Heart right ventricle (tissue), 16 donors: ENCODE measurements at regions of chr12 and their contacts with region 1.

Region 1: DNA sequence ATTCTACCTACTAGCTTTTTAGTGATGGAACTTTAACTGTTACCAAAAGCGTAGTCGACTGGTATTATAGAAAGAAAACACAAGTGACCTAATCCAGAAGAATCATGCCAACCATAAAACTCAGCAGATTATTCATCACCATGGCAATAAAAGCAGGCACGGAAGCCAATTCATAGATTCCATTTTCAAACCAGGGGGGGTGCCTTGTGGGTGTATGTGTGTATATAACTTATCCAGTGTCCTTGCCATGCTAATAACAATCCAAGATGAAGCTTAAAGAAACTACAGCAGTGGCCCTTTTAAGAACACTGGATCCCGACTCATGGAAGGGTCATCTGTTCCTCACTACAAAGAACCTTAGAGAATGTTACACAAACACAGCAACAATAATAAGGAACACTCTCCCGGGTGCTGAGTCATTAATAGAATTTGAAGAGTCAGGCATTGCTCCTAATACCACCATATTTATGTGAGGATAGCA is 61.0 kb downstream of the EPS8 start:
- DNase-seq: no peak
- ATAC-seq: peak in 1 of 8 donors; percentile 47
- H3K4me3 ChIP-seq: no peak overlapping the region
- H3K27ac ChIP-seq: peak overlapping the region in 1 of 10 donors; percentile 54
- H3K4me1 ChIP-seq: peaks cover 0 to 58% (median 10%) of the 10 kb centered on the region in 9 donors
- H3K27me3 ChIP-seq: no peaks in the 10 kb centered on the region
- CTCF ChIP-seq: no peak

Region 2: DNA sequence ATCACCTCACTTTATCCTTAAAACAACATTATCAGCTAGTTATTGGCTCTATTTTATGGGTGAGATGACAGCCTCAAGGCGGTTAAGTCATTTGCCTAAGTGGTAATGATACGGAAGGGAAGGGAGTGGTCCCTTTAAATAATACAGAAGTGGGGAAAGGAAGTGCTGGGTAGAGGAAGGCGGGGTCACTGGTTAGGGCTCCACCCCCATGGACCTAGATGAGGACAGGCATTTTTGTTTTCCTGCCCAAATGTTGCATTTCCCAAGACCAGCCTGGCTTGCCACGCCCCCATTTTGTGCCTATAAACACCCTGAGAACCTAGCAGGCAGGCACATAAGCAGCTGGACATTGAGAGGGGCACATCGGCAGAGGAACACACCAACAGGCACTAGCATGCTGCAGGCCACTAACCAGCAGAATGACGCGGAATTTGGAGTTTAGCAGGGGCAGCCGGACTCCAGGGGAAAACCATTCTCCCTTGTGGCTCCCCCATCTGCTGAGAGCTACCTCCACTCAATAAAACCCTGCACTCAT is 39.9 kb before region 1 on chr12:
- intact Hi-C with region 1: loop called in 1 of 10 experiments (anchors 5 kb)
- DNase-seq: peak; percentile 61 to 67
- ATAC-seq: peak; percentile 68 to 84 (median 78)
- H3K4me3 ChIP-seq: peak overlapping the region in 6 of 10 donors; percentile 17 to 37 (median 26)
- H3K27ac ChIP-seq: peak overlapping the region in 9 of 10 donors; percentile 54 to 81 (median 63)
- H3K4me1 ChIP-seq: peaks cover 0 to 81% (median 28%) of the 10 kb centered on the region in 9 donors
- H3K27me3 ChIP-seq: no peaks in the 10 kb centered on the region
- CTCF ChIP-seq: no peak